Naive thymus-derived CD8-positive, alpha-beta T cell (primary cell): ENCODE measurements at regions of chr19 and their contacts with region 1.

Region 1: DNA sequence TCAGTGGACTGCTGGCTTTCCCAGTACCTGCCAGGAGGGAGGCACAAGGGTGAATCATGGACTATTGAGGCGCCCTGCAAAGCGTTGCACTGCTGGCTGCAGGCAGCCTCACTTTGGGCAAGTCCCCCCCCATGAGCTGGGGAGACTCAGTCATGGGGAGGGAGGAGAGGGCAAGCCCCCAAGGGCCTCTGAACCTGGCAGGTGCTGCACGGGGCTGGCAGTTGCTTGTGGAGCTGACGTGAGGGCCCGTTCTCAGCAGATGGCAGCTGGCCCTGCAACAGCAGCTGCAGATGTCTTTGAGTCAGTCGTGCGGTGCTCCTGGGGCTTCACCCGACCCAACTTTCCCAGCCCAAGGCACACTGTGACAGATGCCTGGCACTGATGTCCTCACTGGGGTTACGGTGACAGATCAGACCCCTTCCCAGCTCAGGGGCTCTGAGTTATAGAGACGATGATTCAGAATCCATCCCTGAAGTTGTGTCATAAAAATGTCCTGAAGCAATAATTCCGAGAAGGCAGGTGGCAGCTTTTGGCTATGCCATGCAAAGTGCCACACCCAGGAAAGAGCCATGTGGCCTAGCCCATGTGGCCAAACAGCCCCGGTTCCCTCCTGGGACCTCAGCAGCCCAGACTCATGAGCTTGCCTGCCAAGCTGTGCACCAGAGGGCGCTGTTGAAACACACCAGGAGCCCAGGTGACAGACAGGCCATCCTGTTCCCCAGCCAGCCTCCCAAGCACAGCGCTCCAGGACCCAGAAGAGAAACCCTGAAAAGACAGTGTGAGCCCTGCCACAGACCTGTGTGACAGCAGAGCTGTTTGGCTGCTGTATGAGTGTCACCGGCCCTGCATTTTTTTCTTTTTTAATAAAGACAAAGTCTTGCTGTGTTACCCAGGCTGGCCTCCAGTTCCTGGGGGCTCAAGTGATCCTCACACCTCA is 53.6 kb upstream of the LDLR start:
- DNase-seq: peak; percentile 64 to 90 (median 75)
- ATAC-seq: peak; percentile 96 to 97
- H3K4me3 Mint-ChIP-seq: no peak overlapping the region
- H3K27ac Mint-ChIP-seq: peak overlapping the region in 8 of 10 donors; percentile 7 to 80 (median 39)
- H3K4me1 Mint-ChIP-seq: peaks cover 2 to 12% (median 8%) of the 10 kb centered on the region in 4 donors
- H3K27me3 Mint-ChIP-seq: no peaks in the 10 kb centered on the region

Region 2: GRCh38 chr19:10984166-10984735 is 51.5 kb before region 1 on chr19:
- POLR2A ChIA-PET with region 1: no interaction called
- DNase-seq: no peak
- ATAC-seq: no peak
- H3K4me3 Mint-ChIP-seq: no peak overlapping the region
- H3K27ac Mint-ChIP-seq: peak overlapping the region in 2 of 10 donors; percentile 26 to 27
- H3K4me1 Mint-ChIP-seq: peaks cover 7 to 23% (median 11%) of the 10 kb centered on the region in 4 donors
- H3K27me3 Mint-ChIP-seq: no peaks in the 10 kb centered on the region

Region 3: DNA sequence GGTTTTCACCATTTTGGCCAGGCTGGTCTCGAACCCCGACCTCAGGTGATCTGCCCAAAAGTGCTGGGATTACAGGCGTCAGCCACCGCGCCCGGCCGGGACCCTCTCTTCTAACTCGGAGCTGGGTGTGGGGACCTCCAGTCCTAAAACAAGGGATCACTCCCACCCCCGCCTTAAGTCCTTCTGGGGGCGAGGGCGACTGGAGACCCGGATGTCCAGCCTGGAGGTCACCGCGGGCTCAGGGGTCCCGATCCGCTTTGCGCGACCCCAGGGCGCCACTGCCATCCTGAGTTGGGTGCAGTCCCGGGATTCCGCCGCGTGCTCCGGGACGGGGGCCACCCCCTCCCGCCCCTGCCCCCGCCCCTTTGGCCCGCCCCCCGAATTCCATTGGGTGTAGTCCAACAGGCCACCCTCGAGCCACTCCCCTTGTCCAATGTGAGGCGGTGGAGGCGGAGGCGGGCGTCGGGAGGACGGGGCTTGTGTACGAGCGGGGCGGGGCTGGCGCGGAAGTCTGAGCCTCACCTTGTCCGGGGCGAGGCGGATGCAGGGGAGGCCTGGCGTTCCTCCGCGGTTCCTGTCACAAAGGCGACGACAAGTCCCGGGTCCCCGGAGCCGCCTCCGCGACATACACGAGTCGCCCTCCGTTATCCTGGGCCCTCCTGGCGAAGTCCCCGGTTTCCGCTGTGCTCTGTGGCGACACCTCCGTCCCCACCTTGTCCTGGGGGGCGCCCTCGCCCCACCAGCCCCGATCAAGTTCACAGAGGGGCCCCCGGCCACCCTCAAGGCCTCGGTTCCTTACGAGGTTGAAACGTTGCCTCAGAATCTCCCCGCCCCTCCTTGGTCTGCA is 54.6 kb after region 1 on chr19:
- POLR2A ChIA-PET with region 1: interaction called, 11 read pairs
- DNase-seq: peak; percentile 90 to 99 (median 96)
- ATAC-seq: peak; percentile 89 to 92
- H3K4me3 Mint-ChIP-seq: peak overlapping the region; percentile 82 to 91 (median 88)
- H3K27ac Mint-ChIP-seq: peak overlapping the region; percentile 89 to 98 (median 96)
- H3K4me1 Mint-ChIP-seq: peaks cover 7 to 51% (median 37%) of the 10 kb centered on the region in 4 donors
- H3K27me3 Mint-ChIP-seq: no peaks in the 10 kb centered on the region